CD4-positive, alpha-beta memory T cell (primary cell): ENCODE measurements at regions of chr1 and their contacts with region 1.

Region 1: DNA sequence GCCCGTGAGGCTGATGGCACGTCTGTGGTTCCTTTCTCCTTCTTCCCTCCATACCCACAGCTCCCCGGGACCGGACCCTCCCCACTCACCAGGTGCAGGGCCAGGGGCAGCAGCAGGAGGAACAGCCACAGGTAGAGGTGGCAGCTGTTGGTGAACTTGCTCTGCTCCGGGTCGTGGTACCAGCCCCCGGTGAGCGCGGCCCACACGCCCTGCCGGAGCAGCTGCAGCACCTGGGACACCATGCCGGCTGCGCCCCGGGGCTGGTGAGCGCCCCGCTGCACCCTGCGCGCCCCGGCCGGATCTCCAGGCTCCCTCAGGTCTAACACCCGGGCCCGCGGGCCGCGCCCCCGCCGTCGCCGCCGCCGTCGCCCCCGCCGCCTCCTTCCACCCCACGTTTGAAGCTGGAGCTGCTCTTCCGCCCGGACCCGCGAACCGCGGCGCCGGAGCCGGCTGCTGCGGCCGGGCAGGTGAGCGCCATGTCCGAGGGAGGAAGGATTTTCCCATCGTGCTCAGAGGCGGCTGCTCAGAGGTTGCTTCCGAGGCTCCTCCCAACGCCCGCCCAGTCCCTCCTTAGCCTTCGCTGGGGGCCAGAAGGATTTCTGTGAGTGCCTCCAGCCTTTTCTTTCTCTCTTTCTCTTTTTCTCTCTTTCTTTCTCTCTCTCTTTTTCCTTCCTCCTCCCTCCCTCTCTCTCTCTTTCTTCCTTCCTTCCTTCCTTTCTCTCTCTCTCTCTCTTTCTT is at the start of gene PCNX2:
- DNase-seq: peak; percentile 60 to 72 (median 65)
- H3K4me3 ChIP-seq: peak within 1 kb of the TSS; percentile 67 to 94
- H3K4me3 Mint-ChIP-seq: peak within 1 kb of the TSS; percentile 86 to 95 (median 90)
- H3K27ac ChIP-seq: peak within 1 kb of the TSS; percentile 63
- H3K27ac Mint-ChIP-seq: peak within 1 kb of the TSS; percentile 81 to 95 (median 92)
- H3K4me1 ChIP-seq: peaks cover 20% of the 10 kb centered on the region
- H3K4me1 Mint-ChIP-seq: peaks cover 21 to 38% (median 28%) of the 10 kb centered on the region in 4 donors
- H3K27me3 ChIP-seq: no peaks in the 10 kb centered on the region
- H3K27me3 Mint-ChIP-seq: peaks cover 0 to 2% of the 10 kb centered on the region in 2 donors
- total RNA-seq, gene PCNX2: 99.2 to 109 TPM

Region 2: DNA sequence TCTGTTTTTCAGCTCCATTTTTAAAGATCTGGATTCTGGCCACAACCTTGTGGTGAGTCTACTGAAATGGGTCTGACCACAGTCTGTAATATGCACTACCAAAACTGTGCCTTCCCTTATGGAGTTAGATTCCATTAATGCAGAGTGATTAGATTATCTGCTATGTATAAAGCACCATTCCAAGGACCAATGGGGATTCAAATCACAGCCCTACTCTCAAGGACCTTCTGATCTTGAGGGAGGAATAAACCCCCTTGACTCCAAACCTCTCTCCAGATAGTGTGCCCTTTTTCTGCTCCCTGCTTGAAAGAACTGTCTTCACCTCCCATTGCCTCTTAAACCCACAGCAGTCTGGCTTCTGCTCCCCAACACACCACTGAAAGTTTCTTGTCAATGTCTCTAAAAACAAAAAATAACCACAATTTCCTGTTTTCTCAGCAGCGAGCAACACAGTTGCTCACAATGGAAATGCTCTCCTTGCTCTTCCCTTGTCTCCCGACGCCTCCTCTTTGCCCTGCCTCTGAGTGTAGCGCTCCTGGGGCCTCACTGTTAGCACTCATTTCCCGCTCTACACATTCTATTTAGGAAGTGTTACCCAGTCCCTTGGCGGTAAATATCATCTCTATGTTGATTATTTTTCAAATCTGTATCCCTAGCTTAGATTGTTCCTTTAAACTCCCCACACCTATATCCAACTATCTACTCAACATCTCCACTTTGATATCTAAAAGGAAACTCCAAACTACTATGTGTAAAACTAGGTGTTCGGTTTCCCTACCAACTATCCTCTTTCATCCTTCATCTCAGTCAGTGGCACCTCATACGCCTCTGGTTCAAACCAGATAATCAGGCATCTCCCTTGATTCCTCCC is 13.5 kb before region 1 on chr1:
- CTCF ChIA-PET with region 1: interaction called, 3 read pairs
- POLR2A ChIA-PET with region 1: interaction called, 20 read pairs
- intact Hi-C with region 1: loop called (anchors 1 kb)
- DNase-seq: peak; percentile 28 to 58 (median 48)
- H3K4me3 ChIP-seq: peak overlapping the region in 1 of 2 donors; percentile 4
- H3K4me3 Mint-ChIP-seq: peak overlapping the region; percentile 59 to 85 (median 70)
- H3K27ac ChIP-seq: peak overlapping the region; percentile 10
- H3K27ac Mint-ChIP-seq: peak overlapping the region; percentile 48 to 96 (median 82)
- H3K4me1 ChIP-seq: peaks cover 31% of the 10 kb centered on the region
- H3K4me1 Mint-ChIP-seq: peaks cover 39 to 55% (median 48%) of the 10 kb centered on the region in 4 donors
- H3K27me3 ChIP-seq: no peaks in the 10 kb centered on the region
- H3K27me3 Mint-ChIP-seq: no peaks in the 10 kb centered on the region

Region 3: GRCh38 chr1:233326811-233327650 is 31.6 kb after region 1 on chr1:
- CTCF ChIA-PET with region 1: no interaction called
- POLR2A ChIA-PET with region 1: interaction called, 19 read pairs
- intact Hi-C with region 1: loop called (anchors 1 kb)
- DNase-seq: peak; percentile 84 to 90 (median 85)
- H3K4me3 ChIP-seq: peak overlapping the region in 1 of 2 donors; percentile 45
- H3K4me3 Mint-ChIP-seq: peak overlapping the region; percentile 73 to 93 (median 84)
- H3K27ac ChIP-seq: peak overlapping the region; percentile 26
- H3K27ac Mint-ChIP-seq: peak overlapping the region; percentile 37 to 86 (median 78)
- H3K4me1 ChIP-seq: peaks cover 9% of the 10 kb centered on the region
- H3K4me1 Mint-ChIP-seq: peaks cover 9 to 20% (median 13%) of the 10 kb centered on the region in 4 donors
- H3K27me3 ChIP-seq: no peaks in the 10 kb centered on the region
- H3K27me3 Mint-ChIP-seq: peaks cover 2% of the 10 kb centered on the region in 2 donors